ENCODE measurements at regions of chr10 and their contacts with region 1.

Region 1: DNA sequence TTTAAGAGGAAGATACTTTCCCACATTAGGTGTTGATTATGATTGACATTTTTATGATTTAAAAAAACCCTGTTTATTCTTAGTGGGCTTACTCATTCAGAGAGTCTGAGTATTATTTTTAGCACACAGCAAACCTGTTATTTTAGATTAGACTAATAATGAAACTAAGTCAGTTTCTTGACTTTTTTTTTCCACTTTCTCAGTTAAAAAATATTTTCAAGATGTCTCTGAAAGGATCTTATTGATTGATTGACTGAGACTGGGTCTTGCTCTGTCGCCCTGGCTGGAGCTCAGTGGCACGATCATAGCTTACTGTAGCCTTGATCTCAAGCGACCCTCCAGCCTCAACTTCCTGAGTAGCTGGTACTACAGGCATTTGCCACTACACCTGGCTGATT is 20.4 kb upstream of the INPP5F start:
- H3K4me3 Mint-ChIP-seq: no peak overlapping the region
- H3K27ac Mint-ChIP-seq: peak overlapping the region; percentile 86
- H3K4me1 Mint-ChIP-seq: peaks cover 56% of the 10 kb centered on the region
- H3K27me3 Mint-ChIP-seq: peaks cover 6% of the 10 kb centered on the region

Region 2: DNA sequence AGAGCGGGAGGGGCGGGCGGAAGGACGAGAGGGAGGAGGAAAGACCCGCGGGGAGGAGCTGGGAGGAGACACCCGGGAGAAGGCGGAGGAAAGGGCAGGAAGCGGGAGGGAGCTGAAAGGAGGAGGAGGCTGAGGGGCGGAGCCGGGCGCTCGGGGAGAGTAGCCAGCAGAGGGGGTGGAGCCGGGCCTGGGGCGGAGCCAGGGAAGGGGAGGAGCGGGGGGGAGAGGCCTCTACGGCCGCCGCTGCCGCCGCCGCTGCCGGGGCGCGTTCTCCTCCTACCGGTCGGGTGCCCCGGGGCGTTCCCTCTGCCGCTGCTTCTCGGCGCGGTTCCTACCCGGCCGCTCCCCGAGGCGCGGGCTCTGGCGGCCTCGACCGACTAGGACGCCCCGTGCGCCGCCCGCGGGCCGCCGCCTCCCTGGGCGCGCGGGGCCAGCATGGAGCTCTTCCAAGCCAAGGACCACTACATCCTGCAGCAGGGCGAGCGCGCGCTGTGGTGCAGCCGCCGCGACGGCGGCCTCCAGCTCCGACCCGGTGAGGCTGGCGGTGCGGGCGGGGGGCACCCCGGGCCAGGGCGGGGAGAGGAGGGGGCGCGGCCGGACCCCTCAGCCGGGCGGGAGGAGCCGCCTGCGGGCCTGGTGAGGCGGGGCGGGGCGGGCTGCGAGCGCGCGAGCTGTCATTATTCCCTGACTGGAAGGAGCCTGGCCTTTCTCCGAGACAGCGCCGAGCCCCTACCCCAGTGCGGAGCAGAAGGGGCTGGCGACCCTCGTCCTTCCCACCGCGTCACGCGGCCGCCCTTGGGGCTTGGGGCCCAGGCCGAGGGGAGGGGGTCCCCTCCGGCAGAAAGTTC is 20.6 kb after region 1 on chr10 and contains the start of gene INPP5F:
- intact Hi-C with region 1: loop called (anchors 2 kb)
- H3K4me3 Mint-ChIP-seq: peak within 1 kb of the TSS; percentile 71
- H3K27ac Mint-ChIP-seq: peak within 1 kb of the TSS; percentile 97
- H3K4me1 Mint-ChIP-seq: peaks cover 36% of the 10 kb centered on the region
- H3K27me3 Mint-ChIP-seq: no peaks in the 10 kb centered on the region

Region 3: GRCh38 chr10:120098232-120098930 is 392.9 kb after region 1 on chr10:
- intact Hi-C with region 1: no loop called
- H3K4me3 Mint-ChIP-seq: no peak overlapping the region
- H3K27ac Mint-ChIP-seq: no peak overlapping the region
- H3K4me1 Mint-ChIP-seq: no peaks in the 10 kb centered on the region
- H3K27me3 Mint-ChIP-seq: no peaks in the 10 kb centered on the region